Heart right ventricle (tissue), 16 donors: ENCODE measurements at regions of chr12 and their contacts with region 1.

Region 1: GRCh38 chr12:13196130-13196921 is at the start of gene EMP1:
- DNase-seq: peak; percentile 79 to 96
- ATAC-seq: peak; percentile 83 to 93 (median 87)
- H3K4me3 ChIP-seq: peak within 1 kb of the TSS; percentile 53 to 71 (median 65)
- H3K27ac ChIP-seq: peak within 1 kb of the TSS; percentile 87 to 97 (median 92)
- H3K4me1 ChIP-seq: peaks cover 7 to 82% (median 41%) of the 10 kb centered on the region in 9 donors
- H3K27me3 ChIP-seq: no peaks in the 10 kb centered on the region
- CTCF ChIP-seq: no peak
- total RNA-seq, gene EMP1: 74.6 to 403 (median 98.5) TPM

Region 2: GRCh38 chr12:13114251-13115052 is 81.9 kb before region 1 on chr12:
- intact Hi-C with region 1: loop called in 1 of 10 experiments (anchors 5 kb)
- DNase-seq: no peak
- ATAC-seq: peak in 6 of 8 donors; percentile 13 to 45 (median 33)
- H3K4me3 ChIP-seq: no peak overlapping the region
- H3K27ac ChIP-seq: peak overlapping the region in 4 of 10 donors; percentile 9 to 44 (median 31)
- H3K4me1 ChIP-seq: peaks cover 7 to 46% (median 27%) of the 10 kb centered on the region in 9 donors
- H3K27me3 ChIP-seq: no peaks in the 10 kb centered on the region
- CTCF ChIP-seq: no peak

Region 3: GRCh38 chr12:13148064-13148847 is 48.1 kb before region 1 on chr12:
- intact Hi-C with region 1: loop called in 3 of 10 experiments (anchors 2 to 10 kb)
- DNase-seq: no peak
- ATAC-seq: peak in 1 of 8 donors; percentile 24
- H3K4me3 ChIP-seq: no peak overlapping the region
- H3K27ac ChIP-seq: peak overlapping the region in 8 of 10 donors; percentile 7 to 66 (median 50)
- H3K4me1 ChIP-seq: peaks cover 0 to 60% (median 30%) of the 10 kb centered on the region in 9 donors
- H3K27me3 ChIP-seq: no peaks in the 10 kb centered on the region
- CTCF ChIP-seq: no peak

Region 4: DNA sequence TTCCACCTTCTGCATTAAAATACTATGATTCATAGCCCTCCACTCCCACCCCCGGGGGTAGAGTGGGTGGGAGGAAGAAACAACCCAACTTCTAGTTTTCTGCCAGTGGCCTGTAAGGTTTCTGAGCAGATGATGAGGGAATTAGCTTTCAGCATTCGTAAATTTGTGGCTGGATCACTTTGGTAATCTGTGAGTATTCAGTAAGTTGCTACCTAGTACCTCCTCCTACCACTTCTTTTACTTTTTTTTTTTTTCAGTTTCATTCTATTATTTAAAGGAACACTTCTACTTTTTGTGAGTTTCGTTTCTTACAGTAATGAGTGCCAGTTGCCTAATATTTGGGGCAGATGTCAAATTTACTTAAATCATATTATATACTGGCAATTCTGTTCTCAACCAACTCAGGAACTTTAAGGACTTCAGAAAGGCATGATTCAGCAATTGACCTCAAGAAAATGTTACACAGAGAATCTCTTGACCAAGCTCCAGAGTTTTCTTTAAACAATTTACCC is 42.2 kb before region 1 on chr12:
- intact Hi-C with region 1: loop called in 3 of 10 experiments (anchors 2 to 10 kb)
- DNase-seq: no peak
- ATAC-seq: peak in 1 of 8 donors; percentile 5
- H3K4me3 ChIP-seq: no peak overlapping the region
- H3K27ac ChIP-seq: peak overlapping the region in 4 of 10 donors; percentile 3 to 75 (median 24)
- H3K4me1 ChIP-seq: peaks cover 0 to 25% (median 9%) of the 10 kb centered on the region in 9 donors
- H3K27me3 ChIP-seq: no peaks in the 10 kb centered on the region
- CTCF ChIP-seq: no peak

Region 5: GRCh38 chr12:13573698-13574321 is 377.5 kb after region 1 on chr12:
- intact Hi-C with region 1: no loop called
- DNase-seq: no peak
- ATAC-seq: no peak
- H3K4me3 ChIP-seq: no peak overlapping the region
- H3K27ac ChIP-seq: no peak overlapping the region
- H3K4me1 ChIP-seq: no peaks in the 10 kb centered on the region
- H3K27me3 ChIP-seq: no peaks in the 10 kb centered on the region
- CTCF ChIP-seq: no peak